A549 (cell line): ENCODE measurements at regions of chr19 and their contacts with region 1.

Region 1: GRCh38 chr19:39671738-39672363 is 16.1 kb downstream of the LGALS16 start:
- DNase-seq: peak; percentile 69 to 83
- ATAC-seq: peak; percentile 95 to 98
- H3K4me3 ChIP-seq: no peak overlapping the region
- H3K27ac ChIP-seq: no peak overlapping the region
- H3K4me1 ChIP-seq: peaks cover 5% of the 10 kb centered on the region; the same call in 1 of the 3 replicates
- CTCF ChIP-seq: peak; percentile 99
- EP300 ChIP-seq: no peak
- POLR2A ChIP-seq: no peak
- RAD21 ChIP-seq: peak; percentile 99 to 100

Region 2: GRCh38 chr19:39502640-39503417 is 169.0 kb before region 1 on chr19:
- CTCF ChIA-PET with region 1: interaction called, 18 read pairs
- POLR2A ChIA-PET with region 1: no interaction called
- DNase-seq: peak; percentile 94 to 97
- ATAC-seq: peak in 1 of 2 experiments; percentile 39; a peak in 4 of 6 replicates
- H3K4me3 ChIP-seq: peak overlapping the region; percentile 16; the same call in 1 of the 3 replicates
- H3K27ac ChIP-seq: peak overlapping the region; percentile 6 to 57; a peak in 2 of 6 replicates
- H3K4me1 ChIP-seq: peaks cover 25% of the 10 kb centered on the region
- CTCF ChIP-seq: peak; percentile 99
- EP300 ChIP-seq: no peak
- POLR2A ChIP-seq: no peak
- RAD21 ChIP-seq: peak in 1 of 2 experiments; percentile 58; a peak in 4 of 5 replicates

Region 3: GRCh38 chr19:39539519-39540332 is 132.1 kb before region 1 on chr19 and contains the start of gene EID2:
- CTCF ChIA-PET with region 1: interaction called, 585 read pairs
- POLR2A ChIA-PET with region 1: no interaction called
- DNase-seq: peak; percentile 99
- ATAC-seq: peak; percentile 93 to 98
- H3K4me3 ChIP-seq: peak within 1 kb of the TSS; percentile 68
- H3K27ac ChIP-seq: peak within 1 kb of the TSS; percentile 88 to 89
- H3K4me1 ChIP-seq: peaks cover 15% of the 10 kb centered on the region
- CTCF ChIP-seq: peak; percentile 90
- EP300 ChIP-seq: no peak
- POLR2A ChIP-seq: peak; percentile 98
- RAD21 ChIP-seq: peak; percentile 71 to 72
- polyA plus RNA-seq, gene EID2: 23.2 and 26.1 TPM in 2 replicates

Region 4: DNA sequence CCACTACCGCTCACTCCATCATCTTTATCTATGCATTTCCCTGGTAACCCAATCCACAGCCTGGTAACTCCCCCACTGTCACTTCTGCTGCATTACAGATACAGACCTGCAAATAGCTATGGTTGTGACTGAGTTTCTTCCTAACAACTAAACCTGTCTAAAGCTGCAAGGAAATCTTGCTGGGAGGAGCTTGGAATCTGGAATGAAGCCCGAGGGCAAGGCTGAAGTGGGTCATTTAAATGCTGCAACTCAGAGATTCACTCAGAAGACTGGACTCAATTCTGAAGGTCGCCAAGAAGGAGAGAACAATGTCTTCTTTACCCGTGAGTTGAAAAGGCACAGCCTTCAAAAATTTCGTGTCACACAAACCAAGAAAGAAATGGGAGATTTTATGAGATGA is 69.6 kb before region 1 on chr19 and contains the start of gene LGALS13:
- CTCF ChIA-PET with region 1: interaction called, 15 read pairs
- POLR2A ChIA-PET with region 1: no interaction called
- DNase-seq: no peak
- ATAC-seq: no peak
- H3K4me3 ChIP-seq: no peak within 1 kb of the TSS
- H3K27ac ChIP-seq: no peak within 1 kb of the TSS
- H3K4me1 ChIP-seq: no peaks in the 10 kb centered on the region
- CTCF ChIP-seq: no peak
- EP300 ChIP-seq: no peak
- POLR2A ChIP-seq: no peak
- RAD21 ChIP-seq: no peak
- polyA plus RNA-seq, gene LGALS13: not detected in 2 replicates

Region 5: GRCh38 chr19:39661565-39661964 is 10.3 kb before region 1 on chr19:
- CTCF ChIA-PET with region 1: interaction called, 58 read pairs
- POLR2A ChIA-PET with region 1: no interaction called
- DNase-seq: no peak
- ATAC-seq: no peak
- H3K4me3 ChIP-seq: no peak overlapping the region
- H3K27ac ChIP-seq: no peak overlapping the region
- H3K4me1 ChIP-seq: no peaks in the 10 kb centered on the region
- CTCF ChIP-seq: no peak
- EP300 ChIP-seq: no peak
- POLR2A ChIP-seq: no peak
- RAD21 ChIP-seq: no peak

Region 6: DNA sequence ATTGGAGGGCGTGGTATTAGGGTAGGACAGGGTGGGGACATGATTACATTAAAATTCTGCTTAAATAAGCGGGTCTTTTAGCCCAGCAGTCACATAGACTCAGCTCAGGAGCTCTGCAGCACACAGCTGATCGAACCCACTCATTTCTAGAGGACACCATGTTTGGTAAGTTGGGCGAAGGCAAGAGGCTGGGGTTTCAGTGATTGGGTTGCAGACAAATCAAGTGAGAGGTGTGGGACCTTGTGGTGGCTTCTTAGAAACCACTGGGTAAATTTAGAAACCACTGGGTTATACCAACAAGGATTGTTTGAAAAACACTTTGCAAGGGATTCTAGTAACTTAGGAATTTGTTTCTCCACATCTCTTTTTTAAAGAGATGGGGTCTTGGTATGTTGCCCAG is 106.9 kb after region 1 on chr19 and contains the start of gene LEUTX:
- CTCF ChIA-PET with region 1: interaction called, 18 read pairs
- POLR2A ChIA-PET with region 1: no interaction called
- DNase-seq: no peak
- ATAC-seq: no peak
- H3K4me3 ChIP-seq: no peak within 1 kb of the TSS
- H3K27ac ChIP-seq: no peak within 1 kb of the TSS
- H3K4me1 ChIP-seq: no peaks in the 10 kb centered on the region
- CTCF ChIP-seq: no peak
- EP300 ChIP-seq: no peak
- POLR2A ChIP-seq: no peak
- RAD21 ChIP-seq: no peak
- polyA plus RNA-seq, gene LEUTX: not detected in 2 replicates

Region 7: GRCh38 chr19:40104754-40105153 is 432.9 kb after region 1 on chr19:
- CTCF ChIA-PET with region 1: no interaction called
- POLR2A ChIA-PET with region 1: no interaction called
- DNase-seq: no peak
- ATAC-seq: no peak
- H3K4me3 ChIP-seq: no peak overlapping the region
- H3K27ac ChIP-seq: no peak overlapping the region
- H3K4me1 ChIP-seq: no peaks in the 10 kb centered on the region
- CTCF ChIP-seq: no peak
- EP300 ChIP-seq: no peak
- POLR2A ChIP-seq: no peak
- RAD21 ChIP-seq: no peak